Lower leg skin (tissue), 4 donors: ENCODE measurements at regions of chr5 and their contacts with region 1.

Region 1: GRCh38 chr5:180950291-180950949 is 38.2 kb upstream of the BTNL3 start:
- DNase-seq: no peak
- H3K4me3 ChIP-seq: no peak overlapping the region
- CTCF ChIP-seq: no peak
- POLR2A ChIP-seq: no peak

Region 2: GRCh38 chr5:180471866-180472265 is 478.6 kb before region 1 on chr5:
- intact Hi-C with region 1: no loop called
- DNase-seq: peak in 1 of 2 donors; percentile 37
- H3K4me3 ChIP-seq: no peak overlapping the region
- CTCF ChIP-seq: no peak
- POLR2A ChIP-seq: no peak

Region 3: DNA sequence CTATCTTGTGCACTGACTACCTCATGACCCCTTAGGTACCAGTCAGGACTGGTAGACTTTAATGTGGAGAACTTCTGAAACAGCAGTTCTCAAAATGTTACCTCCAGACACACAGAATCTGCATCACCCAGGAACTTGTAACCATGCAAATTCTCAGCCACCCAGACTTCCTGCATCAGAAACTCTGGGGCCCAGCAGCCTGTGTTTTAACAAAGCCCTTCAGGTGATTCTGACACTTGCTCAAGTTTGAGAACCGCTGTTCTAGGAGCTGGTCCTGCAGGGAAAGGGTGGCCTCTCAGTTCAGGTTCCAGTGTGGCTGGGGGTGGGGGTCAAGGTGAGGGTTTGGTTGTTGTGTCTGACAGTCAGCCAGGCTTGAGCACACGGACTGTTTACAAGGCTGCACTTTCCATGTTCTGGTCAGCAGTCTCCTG is 117.8 kb before region 1 on chr5:
- intact Hi-C with region 1: no loop called
- DNase-seq: no peak
- H3K4me3 ChIP-seq: no peak overlapping the region
- CTCF ChIP-seq: no peak
- POLR2A ChIP-seq: no peak

Region 4: GRCh38 chr5:180975338-180975737 is 24.9 kb after region 1 on chr5:
- intact Hi-C with region 1: no loop called
- DNase-seq: no peak
- H3K4me3 ChIP-seq: no peak overlapping the region
- CTCF ChIP-seq: no peak
- POLR2A ChIP-seq: no peak

Region 5: DNA sequence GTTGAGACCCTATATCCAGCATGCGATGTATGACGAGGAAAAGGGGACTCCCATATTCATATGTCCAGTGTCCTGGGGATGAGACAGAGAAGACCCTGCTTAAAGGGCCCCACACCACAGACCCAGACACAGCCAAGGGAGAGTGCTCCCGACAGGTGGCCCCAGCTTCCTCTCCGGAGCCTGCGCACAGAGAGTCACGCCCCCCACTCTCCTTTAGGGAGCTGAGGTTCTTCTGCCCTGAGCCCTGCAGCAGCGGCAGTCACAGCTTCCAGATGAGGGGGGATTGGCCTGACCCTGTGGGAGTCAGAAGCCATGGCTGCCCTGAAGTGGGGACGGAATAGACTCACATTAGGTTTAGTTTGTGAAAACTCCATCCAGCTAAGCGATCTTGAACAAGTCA is 55.4 kb after region 1 on chr5:
- intact Hi-C with region 1: loop called (anchors 2 kb)
- DNase-seq: no peak
- H3K4me3 ChIP-seq: no peak overlapping the region
- CTCF ChIP-seq: no peak
- POLR2A ChIP-seq: no peak